ENCODE measurements at regions of chr5 and their contacts with region 1.

Region 1: GRCh38 chr5:171907725-171908343 is 98.6 kb downstream of the FBXW11 start:
- DNase-seq: no peak
- H3K4me3 ChIP-seq: no peak overlapping the region
- H3K27ac ChIP-seq: no peak overlapping the region
- H3K4me1 ChIP-seq: peaks cover 0 to 11% (median 3%) of the 10 kb centered on the region in 3 donors
- H3K27me3 ChIP-seq: no peaks in the 10 kb centered on the region
- CTCF ChIP-seq: peak in 5 of 6 experiments; percentile 63 to 81 (median 75)
- POLR2A ChIP-seq: no peak

Region 2: GRCh38 chr5:171419688-171420430 is 488.0 kb before region 1 on chr5:
- intact Hi-C with region 1: loop called (anchors 5 kb)
- DNase-seq: no peak
- H3K4me3 ChIP-seq: peak overlapping the region; percentile 19 to 64 (median 37)
- H3K27ac ChIP-seq: no peak overlapping the region
- H3K4me1 ChIP-seq: peaks cover 21 to 33% (median 23%) of the 10 kb centered on the region in 3 donors
- H3K27me3 ChIP-seq: peaks cover 0 to 39% (median 0%) of the 10 kb centered on the region in 4 donors
- CTCF ChIP-seq: no peak
- POLR2A ChIP-seq: no peak

Region 3: GRCh38 chr5:171984748-171985419 is 77.0 kb after region 1 on chr5:
- intact Hi-C with region 1: no loop called
- DNase-seq: no peak
- H3K4me3 ChIP-seq: no peak overlapping the region
- H3K27ac ChIP-seq: no peak overlapping the region
- H3K4me1 ChIP-seq: peaks cover 0 to 33% (median 6%) of the 10 kb centered on the region in 3 donors
- H3K27me3 ChIP-seq: no peaks in the 10 kb centered on the region
- CTCF ChIP-seq: no peak
- POLR2A ChIP-seq: no peak

Measured in esophagus squamous epithelium (tissue), 5 donors.